ENCODE measurements at regions of chr21 and their contacts with region 1.

Region 1: DNA sequence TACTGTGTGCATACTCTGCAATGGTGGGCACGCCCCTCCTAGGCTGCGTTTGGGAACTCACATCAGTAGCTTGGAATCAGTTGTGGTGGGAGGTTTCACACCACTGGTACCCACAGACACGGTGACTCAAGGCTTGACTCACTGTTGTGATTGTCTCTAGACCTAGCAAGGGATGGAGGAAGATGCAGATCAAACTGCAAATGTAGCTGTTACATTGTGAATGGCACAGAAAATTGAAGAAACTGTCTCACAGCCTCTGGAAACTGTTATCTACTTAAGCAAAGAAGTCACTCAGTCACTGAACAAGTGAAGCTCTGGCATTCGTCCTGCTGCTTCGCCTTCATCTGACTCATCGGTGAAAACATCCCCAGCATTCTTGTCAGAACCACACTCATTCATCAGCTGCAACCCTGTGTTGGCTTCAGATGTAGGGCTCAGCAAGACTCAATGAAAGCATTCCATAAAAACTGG is 59.5 kb downstream of the POFUT2 start:
- DNase-seq: no peak
- H3K4me3 ChIP-seq: no peak overlapping the region
- H3K27ac ChIP-seq: no peak overlapping the region
- H3K4me1 ChIP-seq: no peaks in the 10 kb centered on the region
- CTCF ChIP-seq: no peak

Region 2: DNA sequence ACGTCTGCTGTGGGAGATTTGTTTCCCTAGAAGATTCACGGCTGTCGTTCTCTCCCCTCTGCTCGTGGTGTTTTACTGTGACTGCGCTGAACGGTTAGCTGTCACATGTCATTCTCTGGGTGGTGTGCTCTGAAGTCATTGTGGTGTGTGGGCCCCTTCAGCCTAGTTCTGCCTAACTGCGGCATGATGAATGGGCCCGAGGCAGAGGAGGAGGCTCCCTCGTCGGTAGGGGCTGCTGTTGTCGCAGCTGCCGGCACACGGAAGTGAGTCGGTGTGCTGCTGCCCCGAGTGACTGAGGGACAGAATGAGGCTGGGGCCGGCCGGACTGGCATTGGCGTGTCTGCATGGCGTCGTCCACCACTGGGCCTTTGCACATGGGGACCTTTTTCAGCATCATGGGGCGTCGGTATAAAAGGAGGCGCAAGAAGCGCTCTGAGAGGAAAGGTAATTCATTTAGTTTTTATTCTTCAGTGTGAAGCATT is 75.9 kb before region 1 on chr21:
- CTCF ChIA-PET with region 1: no interaction called
- POLR2A ChIA-PET with region 1: no interaction called
- intact Hi-C with region 1: loop called (anchors 5 kb)
- DNase-seq: peak; percentile 77
- H3K4me3 ChIP-seq: peak overlapping the region; percentile 58
- H3K27ac ChIP-seq: no peak overlapping the region
- H3K4me1 ChIP-seq: peaks cover 21% of the 10 kb centered on the region
- CTCF ChIP-seq: peak; percentile 75

Region 3: GRCh38 chr21:45255381-45256020 is 27.3 kb after region 1 on chr21:
- CTCF ChIA-PET with region 1: no interaction called
- POLR2A ChIA-PET with region 1: no interaction called
- intact Hi-C with region 1: no loop called
- DNase-seq: peak; percentile 76
- H3K4me3 ChIP-seq: no peak overlapping the region
- H3K27ac ChIP-seq: no peak overlapping the region
- H3K4me1 ChIP-seq: peaks cover 7% of the 10 kb centered on the region
- CTCF ChIP-seq: no peak

Measured in OCI-LY7 (cell line).